ENCODE measurements at regions of chr1 and their contacts with region 1.

Region 1: GRCh38 chr1:10514490-10515235 is 39.9 kb downstream of the PEX14 start:
- DNase-seq: peak; percentile 41 to 49
- ATAC-seq: peak; percentile 42 to 63; a peak in 3 of 6 replicates
- H3K4me3 ChIP-seq: no peak overlapping the region
- H3K27ac ChIP-seq: no peak overlapping the region
- H3K4me1 ChIP-seq: peaks cover 31% of the 10 kb centered on the region
- CTCF ChIP-seq: peak; percentile 59
- EP300 ChIP-seq: no peak
- POLR2A ChIP-seq: no peak
- RAD21 ChIP-seq: peak; percentile 72 to 83

Region 2: GRCh38 chr1:10474613-10475507 is 39.8 kb before region 1 on chr1 and contains the start of gene PEX14:
- CTCF ChIA-PET with region 1: no interaction called
- POLR2A ChIA-PET with region 1: no interaction called
- DNase-seq: peak; percentile 82 to 86
- ATAC-seq: peak; percentile 88 to 91
- H3K4me3 ChIP-seq: peak within 1 kb of the TSS; percentile 92
- H3K27ac ChIP-seq: peak within 1 kb of the TSS; percentile 94 to 98
- H3K4me1 ChIP-seq: peaks cover 13% of the 10 kb centered on the region; the same call in 2 of the 3 replicates
- CTCF ChIP-seq: no peak
- EP300 ChIP-seq: no peak
- POLR2A ChIP-seq: peak; percentile 55
- RAD21 ChIP-seq: no peak
- polyA plus RNA-seq, gene PEX14: 4.2 and 7.7 TPM in 2 replicates

Region 3: GRCh38 chr1:10528066-10529014 is 13.7 kb after region 1 on chr1:
- CTCF ChIA-PET with region 1: interaction called, 10 read pairs
- POLR2A ChIA-PET with region 1: no interaction called
- DNase-seq: peak; percentile 49 to 60
- ATAC-seq: peak; percentile 87 to 94
- H3K4me3 ChIP-seq: no peak overlapping the region; the same call in 2 of the 3 replicates
- H3K27ac ChIP-seq: peak overlapping the region; percentile 51 to 78
- H3K4me1 ChIP-seq: peaks cover 33% of the 10 kb centered on the region
- CTCF ChIP-seq: no peak
- EP300 ChIP-seq: no peak
- POLR2A ChIP-seq: no peak
- RAD21 ChIP-seq: no peak